ENCODE measurements at regions of chr12 and their contacts with region 1.

Region 1: DNA sequence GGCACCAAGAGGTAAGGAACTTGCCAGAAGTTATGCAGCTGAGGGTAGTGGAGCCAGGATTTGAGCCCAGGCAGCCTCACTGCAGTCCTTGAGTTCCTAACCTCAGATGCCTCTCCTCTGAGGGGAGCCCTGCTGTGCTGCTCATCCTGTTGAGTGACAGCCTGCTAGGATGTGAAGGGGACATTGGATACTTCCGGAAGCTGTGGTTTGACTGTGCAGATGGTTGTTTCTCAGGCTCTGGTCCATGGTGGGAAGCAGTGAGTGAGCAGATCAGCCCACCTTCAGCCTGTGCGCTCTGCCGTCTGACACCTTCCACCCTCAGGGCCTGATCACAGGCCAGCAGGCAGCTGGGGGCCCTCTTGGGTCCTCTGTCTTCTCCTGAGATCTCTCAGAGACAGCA is 253.2 kb downstream of the CACNA1C start:
- DNase-seq: no peak
- H3K4me3 Mint-ChIP-seq: no peak overlapping the region
- H3K27ac Mint-ChIP-seq: no peak overlapping the region
- H3K4me1 Mint-ChIP-seq: no peaks in the 10 kb centered on the region
- H3K27me3 Mint-ChIP-seq: peaks cover 57% of the 10 kb centered on the region
- CTCF ChIP-seq: no peak

Region 2: DNA sequence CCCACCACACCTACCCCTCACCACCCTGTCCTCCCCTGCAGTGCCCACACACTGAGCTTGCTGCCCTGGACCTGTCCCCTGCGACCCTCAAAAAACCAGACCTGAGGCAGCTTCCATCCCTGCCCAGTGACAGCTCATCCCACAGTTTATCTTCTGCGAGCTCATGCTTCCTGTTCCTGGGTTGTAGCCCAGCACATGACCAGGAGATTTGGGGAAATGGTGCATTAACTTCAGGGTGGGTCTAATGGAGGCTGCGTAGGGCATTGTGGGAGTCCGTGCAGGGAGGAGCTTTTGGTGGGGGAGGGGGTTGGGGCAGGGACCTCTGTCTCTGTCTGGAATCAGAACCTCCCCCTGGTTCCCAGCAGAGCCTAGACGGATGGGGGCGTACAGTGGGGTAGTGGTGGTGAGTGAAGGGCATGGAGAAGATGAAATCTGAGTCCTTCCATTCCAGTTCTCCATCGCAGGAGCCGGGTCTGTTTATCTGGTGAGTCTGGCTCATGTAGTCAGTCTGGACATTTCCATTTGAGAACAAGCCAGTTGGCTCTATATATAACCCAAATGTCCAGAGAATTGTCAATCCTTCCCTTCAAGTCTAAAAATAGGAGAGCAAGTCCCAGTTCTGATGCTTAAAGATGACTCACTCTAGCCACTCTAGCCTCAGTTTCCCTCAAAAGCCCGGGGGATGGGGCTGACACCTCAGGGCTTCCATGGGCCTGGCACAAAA is 17.7 kb after region 1 on chr12:
- CTCF ChIA-PET with region 1: interaction called, 10 read pairs
- intact Hi-C with region 1: no loop called
- DNase-seq: no peak
- H3K4me3 Mint-ChIP-seq: no peak overlapping the region
- H3K27ac Mint-ChIP-seq: no peak overlapping the region
- H3K4me1 Mint-ChIP-seq: peaks cover 10% of the 10 kb centered on the region
- H3K27me3 Mint-ChIP-seq: peaks cover 21% of the 10 kb centered on the region
- CTCF ChIP-seq: no peak